HepG2 (cell line): ENCODE measurements at regions of chr10 and their contacts with region 1.

Region 1: GRCh38 chr10:26881600-26882331 is 21.0 kb upstream of the ABI1 start:
- DNase-seq: peak; percentile 58
- ATAC-seq: peak; percentile 92
- H3K4me3 ChIP-seq: no peak overlapping the region
- H3K27ac ChIP-seq: no peak overlapping the region
- H3K4me1 ChIP-seq: no peaks in the 10 kb centered on the region
- H3K27me3 ChIP-seq: peaks cover 0 to 3% of the 10 kb centered on the region in 2 experiments; a peak in 1 of 5 replicates
- CTCF ChIP-seq: peak; percentile 81
- EP300 ChIP-seq: no peak
- POLR2A ChIP-seq: no peak
- RAD21 ChIP-seq: peak; percentile 78

Region 2: DNA sequence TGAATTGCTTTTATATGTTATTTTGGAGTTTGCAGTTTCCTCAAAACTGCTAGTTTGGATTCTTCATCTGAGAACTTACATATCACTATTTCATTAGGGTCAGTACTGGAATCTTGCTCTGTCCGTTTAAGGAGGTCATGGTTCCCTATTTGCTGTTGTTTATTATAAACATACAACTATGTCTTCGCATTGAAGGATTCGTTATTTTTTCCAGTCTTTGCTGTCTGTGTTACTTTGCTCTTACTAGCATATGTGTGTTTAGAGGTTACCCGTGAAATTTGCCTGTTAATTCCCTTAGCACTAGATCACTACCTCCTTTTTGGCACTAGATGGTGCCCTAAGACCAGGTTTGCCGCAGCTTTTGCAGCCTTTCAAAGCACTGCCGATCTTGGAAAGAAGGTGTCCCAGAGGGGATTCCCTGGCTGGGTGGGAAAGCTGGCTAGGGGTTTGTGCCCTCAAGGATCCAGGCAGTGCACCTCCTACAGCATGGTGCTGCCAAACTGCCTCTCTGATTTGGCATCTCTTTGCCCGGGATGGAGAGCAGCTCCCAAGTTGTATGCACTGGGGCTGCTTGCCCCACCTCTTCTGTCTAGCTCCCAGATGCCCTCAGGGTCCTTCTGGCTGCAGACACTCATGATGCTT is 546.7 kb before region 1 on chr10:
- CTCF ChIA-PET with region 1: no interaction called
- POLR2A ChIA-PET with region 1: no interaction called
- in situ Hi-C with region 1: loop called (anchors 10 kb)
- intact Hi-C with region 1: no loop called
- DNase-seq: peak; percentile 50
- ATAC-seq: peak; percentile 88
- H3K4me3 ChIP-seq: no peak overlapping the region
- H3K27ac ChIP-seq: no peak overlapping the region
- H3K4me1 ChIP-seq: peaks cover 5% of the 10 kb centered on the region
- H3K27me3 ChIP-seq: peaks cover 0 to 4% of the 10 kb centered on the region in 2 experiments; a peak in 1 of 5 replicates
- CTCF ChIP-seq: peak; percentile 90
- EP300 ChIP-seq: no peak
- POLR2A ChIP-seq: no peak
- RAD21 ChIP-seq: peak; percentile 78

Region 3: DNA sequence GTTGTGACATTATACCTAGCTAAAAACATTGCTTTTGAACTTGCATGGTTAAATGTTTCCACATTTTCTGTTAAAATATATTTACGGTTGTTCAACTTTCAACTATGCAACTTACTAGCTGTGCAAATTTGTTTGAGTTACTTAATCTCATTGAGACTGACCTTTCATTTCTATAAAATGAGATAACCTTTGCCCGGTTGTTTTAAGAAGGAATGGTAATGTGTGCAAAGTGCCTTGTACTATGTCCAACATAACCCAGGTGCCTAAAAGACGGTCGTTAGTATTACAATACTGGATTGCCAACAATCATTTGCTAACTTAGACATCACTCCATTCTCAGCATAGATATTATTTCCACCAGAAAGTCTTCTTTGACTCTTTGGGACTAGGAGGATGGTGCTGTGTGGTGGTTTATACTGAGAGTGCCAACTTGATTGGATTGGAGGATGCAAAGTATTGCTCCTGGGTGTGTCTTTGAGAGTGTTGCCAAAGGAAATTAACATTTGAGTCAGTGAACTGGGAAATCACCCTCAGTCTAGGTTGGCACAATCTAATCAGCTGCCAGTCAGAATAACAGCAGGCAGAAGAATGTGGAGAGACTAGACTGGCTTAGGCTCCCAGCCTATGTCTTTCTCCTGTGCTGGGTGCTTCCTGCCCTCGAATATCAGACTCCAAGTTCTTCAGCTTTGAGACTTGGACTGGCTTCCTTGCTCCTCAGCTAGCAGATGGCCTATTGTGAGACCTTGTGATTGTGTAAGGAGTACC is 269.4 kb before region 1 on chr10:
- CTCF ChIA-PET with region 1: no interaction called
- POLR2A ChIA-PET with region 1: no interaction called
- in situ Hi-C with region 1: loop called (anchors 5 kb)
- intact Hi-C with region 1: no loop called
- DNase-seq: no peak
- ATAC-seq: no peak
- H3K4me3 ChIP-seq: no peak overlapping the region
- H3K27ac ChIP-seq: no peak overlapping the region
- H3K4me1 ChIP-seq: peaks cover 7% of the 10 kb centered on the region
- H3K27me3 ChIP-seq: peaks cover under 1 to 1% of the 10 kb centered on the region in 2 experiments; a peak in 1 of 5 replicates
- CTCF ChIP-seq: no peak
- EP300 ChIP-seq: no peak
- POLR2A ChIP-seq: no peak
- RAD21 ChIP-seq: no peak

Region 4: DNA sequence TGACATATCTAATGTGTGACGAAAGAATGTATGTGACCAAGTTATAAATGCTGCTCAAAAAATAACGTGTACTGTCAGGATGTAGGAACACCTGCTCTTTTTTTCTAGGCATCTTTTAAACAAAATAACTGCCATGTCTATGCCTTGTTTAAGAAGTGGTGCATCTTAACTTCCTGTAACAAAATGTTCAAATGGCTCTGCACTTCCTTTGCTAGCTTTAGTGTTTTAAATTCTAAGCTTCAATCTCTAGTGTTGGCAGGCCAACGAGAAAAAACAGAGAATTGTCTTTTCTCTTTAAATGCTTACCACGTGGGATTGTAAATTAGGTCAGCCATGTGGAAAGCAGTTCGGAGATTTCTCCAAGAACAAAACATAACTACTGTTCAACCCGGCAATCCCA is 198.8 kb before region 1 on chr10:
- CTCF ChIA-PET with region 1: interaction called, 16 read pairs
- POLR2A ChIA-PET with region 1: no interaction called
- in situ Hi-C with region 1: no loop called
- intact Hi-C with region 1: loop called (anchors 1 kb)
- DNase-seq: no peak
- ATAC-seq: no peak
- H3K4me3 ChIP-seq: no peak overlapping the region
- H3K27ac ChIP-seq: no peak overlapping the region
- H3K4me1 ChIP-seq: no peaks in the 10 kb centered on the region
- H3K27me3 ChIP-seq: no peaks in the 10 kb centered on the region
- CTCF ChIP-seq: no peak
- EP300 ChIP-seq: no peak
- POLR2A ChIP-seq: no peak
- RAD21 ChIP-seq: no peak

Region 5: DNA sequence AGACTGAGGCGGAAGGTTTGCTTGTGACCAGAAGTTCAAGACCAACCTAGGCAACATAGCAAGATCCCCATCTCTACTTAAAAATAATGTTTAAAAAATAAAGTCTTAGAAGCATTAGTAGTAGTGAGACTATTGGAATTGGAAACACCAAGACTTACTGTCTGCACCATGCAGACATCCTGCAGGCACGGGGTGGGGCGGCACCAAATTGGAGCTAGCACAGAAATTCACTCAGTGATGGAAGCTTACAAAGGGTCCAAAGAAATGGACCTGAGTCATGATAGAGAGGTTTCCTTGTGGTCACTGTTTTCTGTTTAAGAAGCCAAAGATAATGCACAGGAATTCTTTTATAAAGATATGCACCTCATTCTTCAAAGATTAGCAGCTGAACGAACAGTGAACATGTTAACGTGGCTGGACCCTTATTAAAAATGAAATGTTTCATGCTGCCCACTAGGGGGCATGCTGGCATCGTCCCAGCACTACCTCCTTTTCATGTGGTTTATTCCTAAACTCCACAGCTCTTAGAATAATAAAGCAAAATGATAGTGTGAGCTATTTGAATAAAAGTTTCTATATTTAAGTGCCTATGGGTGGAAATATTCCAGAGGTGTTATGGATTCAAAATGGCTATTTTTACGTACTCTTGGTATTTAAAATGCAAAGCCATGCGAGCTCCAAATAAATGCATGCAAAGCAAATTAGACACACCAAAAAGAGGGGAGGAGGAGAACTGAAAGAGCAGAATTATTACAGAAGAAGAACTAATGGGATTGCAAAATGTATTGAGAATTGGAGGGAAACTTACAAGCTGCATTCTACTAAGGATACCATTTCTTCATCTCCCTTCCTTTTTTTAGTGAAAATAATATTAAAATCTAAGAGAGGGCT is 155.7 kb before region 1 on chr10:
- CTCF ChIA-PET with region 1: interaction called, 20 read pairs
- POLR2A ChIA-PET with region 1: no interaction called
- in situ Hi-C with region 1: loop called (anchors 5 kb)
- intact Hi-C with region 1: loop called (anchors 1 kb)
- DNase-seq: peak; percentile 27
- ATAC-seq: peak; percentile 77
- H3K4me3 ChIP-seq: no peak overlapping the region
- H3K27ac ChIP-seq: no peak overlapping the region
- H3K4me1 ChIP-seq: no peaks in the 10 kb centered on the region
- H3K27me3 ChIP-seq: no peaks in the 10 kb centered on the region
- CTCF ChIP-seq: peak; percentile 83
- EP300 ChIP-seq: no peak
- POLR2A ChIP-seq: no peak
- RAD21 ChIP-seq: peak; percentile 76

Region 6: GRCh38 chr10:26860443-26861204 is 21.1 kb before region 1 on chr10 and contains the start of gene ABI1:
- CTCF ChIA-PET with region 1: interaction called, 5 read pairs
- POLR2A ChIA-PET with region 1: no interaction called
- in situ Hi-C with region 1: no loop called
- intact Hi-C with region 1: loop called (anchors 2 kb)
- DNase-seq: peak; percentile 98
- ATAC-seq: peak; percentile 95
- H3K4me3 ChIP-seq: peak within 1 kb of the TSS; percentile 75 to 100 (median 95)
- H3K27ac ChIP-seq: peak within 1 kb of the TSS; percentile 93
- H3K4me1 ChIP-seq: peaks cover 31% of the 10 kb centered on the region
- H3K27me3 ChIP-seq: peaks cover 0 to 7% of the 10 kb centered on the region in 2 experiments; a peak in 1 of 5 replicates
- CTCF ChIP-seq: no peak
- EP300 ChIP-seq: 0 out of 4 replicates have a peak, but pooled peaks of 1 of the 2 experiments have one; percentile 33
- POLR2A ChIP-seq: peak; percentile 93 to 94
- RAD21 ChIP-seq: no peak
- total RNA-seq, gene ABI1: 22.9 and 29.3 TPM in 2 replicates